ENCODE measurements at regions of chr2 and their contacts with region 1.

Region 1: DNA sequence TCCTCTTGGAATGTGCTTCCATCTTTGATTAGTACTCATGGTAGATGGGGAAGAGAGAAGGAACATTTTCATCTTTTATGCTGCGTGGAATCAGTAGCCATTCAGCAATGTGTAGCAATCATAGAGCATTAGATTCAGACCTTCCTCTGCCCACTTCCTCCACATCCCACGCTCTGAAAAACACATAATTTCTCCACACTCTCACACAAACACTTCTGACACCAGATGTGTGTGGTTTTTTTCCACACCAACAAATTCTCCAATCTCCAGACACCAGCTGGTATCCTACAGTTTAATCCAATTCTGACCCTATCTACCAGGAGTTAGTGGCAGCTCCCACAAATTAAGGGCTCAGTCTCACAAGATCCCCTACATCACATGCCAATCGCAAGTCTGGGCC is 103.3 kb downstream of the AOX1 start:
- DNase-seq: no peak
- H3K4me3 ChIP-seq: no peak overlapping the region
- H3K27ac ChIP-seq: no peak overlapping the region
- H3K4me1 ChIP-seq: no peaks in the 10 kb centered on the region
- H3K27me3 ChIP-seq: no peaks in the 10 kb centered on the region
- CTCF ChIP-seq: no peak
- EP300 ChIP-seq: no peak
- POLR2A ChIP-seq: no peak

Region 2: DNA sequence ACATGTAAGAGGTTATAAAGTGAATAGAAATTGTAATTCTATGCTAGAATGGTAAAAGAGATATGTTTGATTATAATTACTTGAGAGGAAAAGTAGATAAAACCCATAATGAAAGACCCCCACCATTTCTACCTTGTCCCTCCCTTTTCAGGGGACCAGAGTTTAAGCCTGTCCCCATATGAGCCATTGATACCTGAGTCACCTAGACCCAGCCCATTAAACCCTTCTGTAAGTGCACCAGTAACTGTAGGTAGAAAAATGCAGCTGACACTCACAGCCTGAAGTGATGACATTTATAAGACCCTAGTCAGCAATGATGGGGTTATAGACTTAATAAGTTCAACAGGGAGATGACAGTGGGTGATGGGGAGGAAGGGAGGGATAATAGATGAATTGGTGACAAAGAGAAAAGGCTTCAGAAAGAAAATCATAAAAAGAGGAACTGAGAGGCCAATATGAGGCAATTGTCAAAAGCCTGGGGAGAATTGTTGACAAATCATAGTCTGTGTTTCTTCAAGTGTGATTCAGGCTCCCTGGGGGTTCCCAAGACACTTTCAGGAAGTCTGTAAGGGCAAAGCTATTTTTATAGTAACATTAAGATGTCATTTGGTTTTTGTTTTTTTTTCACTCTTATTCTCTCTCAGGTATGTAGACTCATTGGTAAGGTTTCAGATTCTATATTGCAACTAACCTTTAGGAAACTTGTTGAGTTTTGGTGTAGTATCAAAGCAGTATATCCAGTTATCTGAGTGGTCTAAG is 1775.5 kb before region 1 on chr2:
- intact Hi-C with region 1: no loop called
- DNase-seq: no peak
- H3K4me3 ChIP-seq: no peak overlapping the region
- H3K27ac ChIP-seq: no peak overlapping the region
- H3K4me1 ChIP-seq: no peaks in the 10 kb centered on the region
- H3K27me3 ChIP-seq: no peaks in the 10 kb centered on the region
- CTCF ChIP-seq: no peak
- EP300 ChIP-seq: no peak
- POLR2A ChIP-seq: no peak

Region 3: GRCh38 chr2:200944467-200945394 is 255.6 kb after region 1 on chr2:
- intact Hi-C with region 1: loop called in 1 of 4 experiments (anchors 10 kb)
- DNase-seq: no peak
- H3K4me3 ChIP-seq: no peak overlapping the region
- H3K27ac ChIP-seq: no peak overlapping the region
- H3K4me1 ChIP-seq: no peaks in the 10 kb centered on the region
- H3K27me3 ChIP-seq: no peaks in the 10 kb centered on the region
- CTCF ChIP-seq: no peak
- EP300 ChIP-seq: no peak
- POLR2A ChIP-seq: no peak

Measured in ovary (tissue), 10 donors.